WTC11 (cell line): ENCODE measurements at regions of chr1 and their contacts with region 1.

Region 1: GRCh38 chr1:204746838-204747442 is 61.4 kb upstream of the LRRN2 start:
- DNase-seq: peak; percentile 68
- ATAC-seq: peak; percentile 87
- H3K4me3 Mint-ChIP-seq: no peak overlapping the region
- H3K27ac Mint-ChIP-seq: no peak overlapping the region
- H3K4me1 Mint-ChIP-seq: peaks cover 29% of the 10 kb centered on the region
- H3K27me3 Mint-ChIP-seq: peaks cover 12% of the 10 kb centered on the region; the same call in 1 of the 2 replicates
- CTCF ChIP-seq: peak; percentile 99

Region 2: GRCh38 chr1:204572931-204573891 is 173.7 kb before region 1 on chr1:
- CTCF ChIA-PET with region 1: interaction called, 15 read pairs
- POLR2A ChIA-PET with region 1: no interaction called
- DNase-seq: no peak
- ATAC-seq: no peak
- H3K4me3 Mint-ChIP-seq: no peak overlapping the region
- H3K27ac Mint-ChIP-seq: no peak overlapping the region
- H3K4me1 Mint-ChIP-seq: peaks cover 82% of the 10 kb centered on the region
- H3K27me3 Mint-ChIP-seq: peaks cover 22% of the 10 kb centered on the region
- CTCF ChIP-seq: no peak

Region 3: GRCh38 chr1:204685236-204686006 is 61.5 kb before region 1 on chr1 and contains the start of gene LRRN2:
- CTCF ChIA-PET with region 1: interaction called, 10 read pairs
- POLR2A ChIA-PET with region 1: no interaction called
- DNase-seq: peak; percentile 42
- ATAC-seq: peak; percentile 33
- H3K4me3 Mint-ChIP-seq: peak within 1 kb of the TSS; percentile 85
- H3K27ac Mint-ChIP-seq: no peak within 1 kb of the TSS; the same call in 1 of the 2 replicates
- H3K4me1 Mint-ChIP-seq: peaks cover 26% of the 10 kb centered on the region
- H3K27me3 Mint-ChIP-seq: peaks cover 65% of the 10 kb centered on the region
- CTCF ChIP-seq: no peak
- total RNA-seq, gene LRRN2: 3.2 to 5.3 TPM (median 3.4 TPM) in 3 replicates

Region 4: DNA sequence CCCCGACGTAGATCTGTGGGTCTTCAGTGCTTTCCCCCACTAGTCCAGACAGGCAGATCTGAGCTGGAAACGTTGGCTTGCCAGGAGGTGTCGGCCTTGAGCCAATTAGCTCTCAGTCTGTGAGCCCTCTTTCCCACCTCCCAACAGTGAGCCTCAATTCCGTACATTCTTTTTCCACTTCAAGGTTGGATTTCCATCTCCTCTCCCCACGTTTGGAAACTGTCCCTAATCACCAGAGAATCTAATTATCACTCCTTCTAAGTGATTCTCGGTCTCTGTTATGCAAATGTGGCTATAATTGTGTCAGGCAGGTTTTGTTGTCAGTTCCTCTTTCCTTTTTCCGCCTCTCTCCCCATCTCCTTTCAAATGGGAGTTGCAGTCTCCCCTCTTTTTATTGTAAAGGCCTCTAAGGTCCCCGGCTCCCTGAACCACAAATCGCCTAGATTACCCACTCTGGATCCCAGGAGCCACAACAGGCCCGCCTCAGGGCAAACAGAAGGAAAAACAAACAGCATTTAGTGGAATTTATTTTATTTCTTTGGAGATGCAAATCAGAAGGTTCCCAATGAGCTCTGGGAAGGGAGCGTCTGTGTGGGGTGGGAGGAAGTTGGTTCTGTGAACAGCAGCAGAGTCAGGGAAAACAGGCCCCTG is 32.0 kb before region 1 on chr1:
- CTCF ChIA-PET with region 1: interaction called, 58 read pairs
- POLR2A ChIA-PET with region 1: no interaction called
- DNase-seq: peak; percentile 68
- ATAC-seq: peak; percentile 55
- H3K4me3 Mint-ChIP-seq: peak overlapping the region; percentile 50
- H3K27ac Mint-ChIP-seq: peak overlapping the region; percentile 86
- H3K4me1 Mint-ChIP-seq: peaks cover 66% of the 10 kb centered on the region
- H3K27me3 Mint-ChIP-seq: peaks cover 94% of the 10 kb centered on the region
- CTCF ChIP-seq: no peak

Region 5: DNA sequence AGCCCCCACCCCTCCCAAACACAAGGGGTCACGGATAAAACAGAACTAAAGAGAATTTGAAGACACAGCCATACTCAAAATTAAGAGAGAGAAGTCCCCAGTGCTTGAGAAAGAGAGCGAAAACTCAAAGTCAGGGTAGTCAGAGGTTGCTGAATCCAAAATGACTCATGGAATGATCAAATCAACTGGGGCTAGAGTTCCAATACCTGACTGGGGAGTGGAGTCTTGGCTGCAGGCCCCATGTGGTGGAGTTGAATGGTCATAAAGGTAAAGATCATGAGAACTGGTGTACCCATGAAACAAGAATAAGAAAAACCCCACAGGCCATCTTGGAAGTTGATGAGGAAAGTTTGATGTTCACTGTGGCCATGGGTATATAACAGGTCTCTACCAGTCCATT is 23.1 kb after region 1 on chr1:
- CTCF ChIA-PET with region 1: interaction called, 11 read pairs
- POLR2A ChIA-PET with region 1: no interaction called
- DNase-seq: no peak
- ATAC-seq: no peak
- H3K4me3 Mint-ChIP-seq: no peak overlapping the region
- H3K27ac Mint-ChIP-seq: no peak overlapping the region
- H3K4me1 Mint-ChIP-seq: peaks cover 5% of the 10 kb centered on the region
- H3K27me3 Mint-ChIP-seq: peaks cover 39% of the 10 kb centered on the region
- CTCF ChIP-seq: no peak

Region 6: DNA sequence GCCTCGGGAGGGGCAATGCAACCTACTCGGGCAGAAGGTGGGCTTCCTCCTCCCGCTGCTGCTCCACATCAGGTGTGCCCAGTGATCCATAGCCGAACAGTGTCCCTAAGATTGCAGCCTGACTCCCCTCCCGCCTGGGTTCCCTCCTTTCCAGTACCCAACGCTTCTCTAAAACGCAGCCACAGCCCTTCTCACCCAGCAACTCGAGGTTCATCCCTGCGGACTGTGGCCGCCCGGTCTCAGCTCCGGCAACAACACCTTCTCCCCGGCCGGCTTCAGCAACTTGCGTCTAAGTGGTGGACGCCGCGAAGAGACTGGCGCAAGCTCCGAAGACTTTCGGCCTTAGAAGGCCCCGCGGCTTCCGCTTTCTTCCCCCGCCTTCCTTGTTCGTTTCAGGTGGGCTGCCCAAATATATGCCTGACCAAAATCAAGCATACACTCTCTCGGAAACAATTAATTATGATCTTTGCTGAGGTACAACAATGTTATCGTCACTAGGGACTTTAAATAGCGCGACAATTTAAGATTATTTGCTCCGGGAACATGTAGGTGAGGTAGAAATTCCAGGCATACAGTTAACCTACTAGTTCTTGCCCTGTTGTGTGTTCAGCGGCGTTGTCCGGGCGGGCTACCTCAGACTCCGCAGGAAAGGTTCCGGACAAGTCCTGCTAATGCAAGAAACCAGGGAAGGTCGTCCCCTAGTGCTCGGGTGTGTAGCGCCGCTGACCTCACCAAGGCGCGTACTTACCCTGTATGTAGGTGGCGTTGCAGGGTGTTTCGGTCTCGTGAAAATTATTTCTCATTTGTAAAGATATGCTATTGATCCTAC is 374.9 kb after region 1 on chr1 and contains the start of gene RBBP5:
- CTCF ChIA-PET with region 1: no interaction called
- POLR2A ChIA-PET with region 1: no interaction called
- DNase-seq: peak; percentile 96
- ATAC-seq: peak; percentile 100
- H3K4me3 Mint-ChIP-seq: peak within 1 kb of the TSS; percentile 98
- H3K27ac Mint-ChIP-seq: peak within 1 kb of the TSS; percentile 100
- H3K4me1 Mint-ChIP-seq: peaks cover 18% of the 10 kb centered on the region
- H3K27me3 Mint-ChIP-seq: no peaks in the 10 kb centered on the region; the same call in 1 of the 2 replicates
- CTCF ChIP-seq: no peak
- total RNA-seq, gene RBBP5: 18.5 to 23.8 TPM (median 20.1 TPM) in 3 replicates